Activated T-helper 1 cell treated with anti-CD3 and anti-CD28 coated beads, Interleukin-12 subunit alpha, Interleukin-12 subunit beta, Interleukin-2, Interleukin-4 antibody, amounts not matched to agents 30 ng/mL and 10 ng/mL and 1 ng/mL, durations not matched to agents 14 hours and 24 hours and 36 hours (primary cell): ENCODE measurements at regions of chr5 and their contacts with region 1.

Region 1: DNA sequence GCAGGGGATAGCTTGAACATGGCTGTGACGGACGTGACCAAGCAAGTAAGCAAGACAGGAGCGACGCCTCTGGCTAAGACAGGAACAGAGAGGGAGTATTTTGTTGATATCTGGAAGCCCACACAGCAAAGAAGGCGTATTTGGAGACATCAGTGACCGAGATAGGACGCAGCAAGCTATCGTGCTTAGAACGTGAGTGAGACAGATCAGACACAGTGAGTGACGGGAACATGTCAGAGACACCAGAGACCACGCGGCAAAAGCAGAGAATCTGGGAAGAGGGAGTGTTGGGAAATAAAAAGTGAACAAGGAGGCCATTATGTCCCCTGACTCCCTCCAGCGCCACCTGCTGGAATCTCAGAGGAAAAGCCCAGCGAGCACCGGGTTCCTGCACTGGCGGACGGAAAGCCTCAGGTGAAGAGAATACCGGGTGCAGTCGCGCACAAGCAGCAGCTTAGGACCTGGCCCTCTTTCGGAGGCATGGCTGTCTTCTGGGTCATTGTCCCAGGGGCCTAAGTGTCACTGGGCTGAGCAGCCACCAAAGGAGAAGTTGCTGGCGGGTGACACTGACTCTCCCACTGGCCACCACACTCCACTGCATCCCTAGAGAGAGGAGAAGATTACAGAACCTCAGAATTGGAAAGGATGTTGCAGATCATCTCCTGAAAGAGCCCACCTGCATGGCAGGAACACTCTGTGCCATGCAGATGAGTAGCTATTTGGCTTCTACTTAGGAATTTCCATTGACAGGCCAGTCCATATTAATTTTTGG is 99.1 kb downstream of the FBXO38 start:
- DNase-seq: peak; percentile 49
- H3K4me3 Mint-ChIP-seq: no peak overlapping the region
- H3K27ac Mint-ChIP-seq: no peak overlapping the region
- H3K4me1 Mint-ChIP-seq: no peaks in the 10 kb centered on the region
- H3K27me3 Mint-ChIP-seq: peaks cover 15% of the 10 kb centered on the region

Region 2: DNA sequence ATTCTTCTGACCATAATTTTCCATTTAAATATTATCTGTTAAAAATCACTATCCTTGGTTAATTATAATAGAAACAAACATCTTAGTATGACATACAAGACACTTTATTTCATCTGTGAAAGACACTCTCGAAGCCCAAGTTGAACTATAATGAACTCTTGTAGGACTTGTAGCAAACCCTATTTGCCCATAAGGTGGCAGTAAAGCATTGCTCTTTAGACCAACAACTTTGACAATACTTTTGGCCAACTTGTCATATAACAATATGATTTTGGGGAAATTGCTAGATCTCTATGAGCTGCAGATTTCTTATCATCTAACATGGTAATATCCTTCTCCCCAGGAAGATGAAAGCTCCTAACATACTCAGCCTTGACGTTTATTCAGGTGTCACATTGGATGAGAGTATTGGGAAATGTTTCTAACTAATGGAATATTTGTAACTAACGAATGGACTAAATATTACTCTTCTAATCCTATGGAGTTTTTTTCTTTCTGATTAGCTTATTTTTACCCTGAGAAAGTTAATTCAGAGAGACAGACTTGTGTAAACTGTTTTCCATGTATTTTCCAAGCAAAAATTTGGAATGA is 303.5 kb before region 1 on chr5:
- intact Hi-C with region 1: loop called (anchors 1 kb)
- DNase-seq: no peak
- H3K4me3 Mint-ChIP-seq: no peak overlapping the region
- H3K27ac Mint-ChIP-seq: no peak overlapping the region
- H3K4me1 Mint-ChIP-seq: no peaks in the 10 kb centered on the region
- H3K27me3 Mint-ChIP-seq: peaks cover 7% of the 10 kb centered on the region

Region 3: DNA sequence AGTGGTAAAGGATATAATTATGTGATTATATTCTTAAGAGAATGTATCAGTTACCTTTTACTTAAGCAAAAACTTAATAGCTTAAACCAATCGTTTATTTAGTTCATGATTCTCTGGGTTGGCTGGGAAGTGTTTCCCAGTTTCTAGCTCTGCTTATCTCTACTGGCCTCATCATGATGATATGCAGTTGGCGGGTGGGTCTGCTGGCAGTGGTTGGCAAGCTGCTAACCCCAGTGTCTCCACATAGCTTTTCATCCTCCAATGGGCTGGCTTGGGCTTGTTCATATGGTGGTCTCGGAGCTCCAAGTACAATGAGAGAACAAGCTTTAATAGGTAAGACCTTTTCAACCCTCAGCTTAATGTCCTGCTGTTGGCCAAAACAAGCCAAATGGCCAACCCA is 702.2 kb after region 1 on chr5:
- intact Hi-C with region 1: no loop called
- DNase-seq: no peak
- H3K4me3 Mint-ChIP-seq: no peak overlapping the region
- H3K27ac Mint-ChIP-seq: no peak overlapping the region
- H3K4me1 Mint-ChIP-seq: no peaks in the 10 kb centered on the region
- H3K27me3 Mint-ChIP-seq: peaks cover 9% of the 10 kb centered on the region